GM18951 (cell line): ENCODE measurements at regions of chr1 and their contacts with region 1.

Region 1: DNA sequence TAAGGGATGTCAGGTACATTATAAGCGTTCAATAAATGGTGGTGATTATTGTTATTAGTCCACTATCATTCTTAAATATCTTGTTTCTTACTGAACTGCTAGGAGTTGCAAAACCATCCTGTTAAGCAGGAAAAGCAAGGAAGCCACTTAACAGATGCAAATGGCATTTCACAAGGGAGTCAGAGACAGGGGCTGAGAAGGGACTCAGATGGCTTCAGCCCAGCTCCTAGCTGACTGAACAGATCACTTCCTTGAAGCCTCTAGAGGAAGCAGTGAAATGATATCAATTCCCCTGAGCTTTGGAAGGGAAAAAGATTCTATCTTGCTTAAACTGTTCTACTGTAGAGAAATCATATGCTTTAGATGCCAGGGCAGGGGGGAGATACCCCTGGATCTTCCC is 151.5 kb downstream of the ST6GALNAC5 start:
- POLR2A ChIP-seq: no peak

Region 2: GRCh38 chr1:76480827-76481226 is 537.9 kb before region 1 on chr1:
- in situ Hi-C with region 1: no loop called
- POLR2A ChIP-seq: no peak

Region 3: DNA sequence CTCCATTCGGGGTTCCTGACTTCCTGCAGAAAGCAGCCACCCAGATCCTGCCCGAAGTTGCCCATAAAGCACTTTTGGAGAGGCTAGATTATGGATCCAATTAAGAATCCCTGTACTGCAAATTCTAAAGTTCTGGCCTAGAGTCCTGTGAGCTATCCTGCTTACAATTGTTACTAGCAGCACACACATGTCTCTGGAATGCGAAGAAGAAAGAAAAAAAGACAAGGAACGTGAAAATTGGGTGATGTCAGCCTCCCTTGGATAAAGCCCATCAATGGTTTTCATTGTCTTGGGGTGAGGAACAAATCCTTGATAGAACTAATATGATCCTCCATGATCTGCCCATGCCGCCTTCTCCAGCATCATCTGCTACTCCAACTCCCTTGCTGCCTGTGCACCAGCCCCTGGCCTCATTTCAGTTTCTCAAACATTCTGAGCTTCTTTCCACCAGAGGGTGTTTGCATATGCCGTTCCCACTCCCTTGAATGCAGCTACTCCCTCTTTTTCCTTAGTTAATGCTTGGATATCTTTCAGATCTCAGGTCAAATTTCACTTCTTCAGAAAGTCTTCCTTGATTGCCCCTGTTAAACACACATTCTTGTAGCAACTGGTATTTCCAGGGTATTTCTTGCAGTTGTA is 57.5 kb before region 1 on chr1:
- in situ Hi-C with region 1: loop called (anchors 10 kb)
- POLR2A ChIP-seq: no peak